ENCODE measurements at regions of chr15 and their contacts with region 1.

Region 1: GRCh38 chr15:50354838-50355618 is at the start of gene GABPB1:
- DNase-seq: peak; percentile 90
- H3K4me3 Mint-ChIP-seq: peak within 1 kb of the TSS; percentile 88
- H3K27ac Mint-ChIP-seq: peak within 1 kb of the TSS; percentile 100
- H3K4me1 Mint-ChIP-seq: peaks cover 42% of the 10 kb centered on the region
- H3K27me3 Mint-ChIP-seq: no peaks in the 10 kb centered on the region
- total RNA-seq, gene GABPB1: 37.5 to 38.1 TPM

Region 2: GRCh38 chr15:49155110-49155833 is 1199.8 kb before region 1 on chr15 and contains the start of gene COPS2:
- CTCF ChIA-PET with region 1: no interaction called
- POLR2A ChIA-PET with region 1: interaction called, 11 read pairs
- DNase-seq: peak; percentile 96
- H3K4me3 Mint-ChIP-seq: peak within 1 kb of the TSS; percentile 98
- H3K27ac Mint-ChIP-seq: peak within 1 kb of the TSS; percentile 93
- H3K4me1 Mint-ChIP-seq: peaks cover 54% of the 10 kb centered on the region
- H3K27me3 Mint-ChIP-seq: no peaks in the 10 kb centered on the region
- total RNA-seq, gene COPS2: 62.6 to 68.7 TPM

Region 3: GRCh38 chr15:50260969-50261496 is 94.0 kb before region 1 on chr15:
- CTCF ChIA-PET with region 1: no interaction called
- POLR2A ChIA-PET with region 1: interaction called, 80 read pairs
- DNase-seq: no peak
- H3K4me3 Mint-ChIP-seq: peak overlapping the region; percentile 2
- H3K27ac Mint-ChIP-seq: peak overlapping the region; percentile 90
- H3K4me1 Mint-ChIP-seq: peaks cover 79% of the 10 kb centered on the region
- H3K27me3 Mint-ChIP-seq: no peaks in the 10 kb centered on the region

Region 4: GRCh38 chr15:50424066-50424890 is 69.2 kb after region 1 on chr15 and contains the start of gene USP8:
- CTCF ChIA-PET with region 1: interaction called, 5 read pairs
- POLR2A ChIA-PET with region 1: interaction called, 136 read pairs
- DNase-seq: peak; percentile 94
- H3K4me3 Mint-ChIP-seq: peak within 1 kb of the TSS; percentile 98
- H3K27ac Mint-ChIP-seq: peak within 1 kb of the TSS; percentile 84
- H3K4me1 Mint-ChIP-seq: peaks cover 36% of the 10 kb centered on the region
- H3K27me3 Mint-ChIP-seq: no peaks in the 10 kb centered on the region
- total RNA-seq, gene USP8: 59.4 to 59.9 TPM

Region 5: GRCh38 chr15:50765195-50765973 is 410.4 kb after region 1 on chr15 and contains the start of gene SPPL2A:
- CTCF ChIA-PET with region 1: no interaction called
- POLR2A ChIA-PET with region 1: interaction called, 44 read pairs
- DNase-seq: peak; percentile 90
- H3K4me3 Mint-ChIP-seq: peak within 1 kb of the TSS; percentile 80
- H3K27ac Mint-ChIP-seq: peak within 1 kb of the TSS; percentile 84
- H3K4me1 Mint-ChIP-seq: peaks cover 47% of the 10 kb centered on the region
- H3K27me3 Mint-ChIP-seq: no peaks in the 10 kb centered on the region
- total RNA-seq, gene SPPL2A: 99.9 to 102 TPM

Region 6: GRCh38 chr15:50883903-50884302 is 528.9 kb after region 1 on chr15:
- CTCF ChIA-PET with region 1: interaction called, 3 read pairs
- POLR2A ChIA-PET with region 1: interaction called, 26 read pairs
- DNase-seq: peak; percentile 52
- H3K4me3 Mint-ChIP-seq: no peak overlapping the region
- H3K27ac Mint-ChIP-seq: peak overlapping the region; percentile 91
- H3K4me1 Mint-ChIP-seq: peaks cover 72% of the 10 kb centered on the region
- H3K27me3 Mint-ChIP-seq: no peaks in the 10 kb centered on the region

Measured in activated CD4-positive, alpha-beta memory T cell treated with anti-CD3 and anti-CD28 coated beads, Interleukin-2, amount 10 ng/mL, durations not matched to agents 7 days and 5 days (primary cell).